ENCODE measurements at regions of chr9 and their contacts with region 1.

Region 1: GRCh38 chr9:107260437-107261086 is 22.5 kb upstream of the RAD23B start:
- DNase-seq: peak; percentile 88
- ATAC-seq: peak; percentile 98
- H3K4me3 ChIP-seq: peak overlapping the region; percentile 27; the same call in 1 of the 2 replicates
- H3K27ac ChIP-seq: peak overlapping the region; percentile 36
- H3K4me1 ChIP-seq: peaks cover 11% of the 10 kb centered on the region
- H3K27me3 ChIP-seq: no peaks in the 10 kb centered on the region
- CTCF ChIP-seq: no peak
- EP300 ChIP-seq: peak; percentile 95 to 97
- POLR2A ChIP-seq: no peak
- RAD21 ChIP-seq: no peak

Region 2: DNA sequence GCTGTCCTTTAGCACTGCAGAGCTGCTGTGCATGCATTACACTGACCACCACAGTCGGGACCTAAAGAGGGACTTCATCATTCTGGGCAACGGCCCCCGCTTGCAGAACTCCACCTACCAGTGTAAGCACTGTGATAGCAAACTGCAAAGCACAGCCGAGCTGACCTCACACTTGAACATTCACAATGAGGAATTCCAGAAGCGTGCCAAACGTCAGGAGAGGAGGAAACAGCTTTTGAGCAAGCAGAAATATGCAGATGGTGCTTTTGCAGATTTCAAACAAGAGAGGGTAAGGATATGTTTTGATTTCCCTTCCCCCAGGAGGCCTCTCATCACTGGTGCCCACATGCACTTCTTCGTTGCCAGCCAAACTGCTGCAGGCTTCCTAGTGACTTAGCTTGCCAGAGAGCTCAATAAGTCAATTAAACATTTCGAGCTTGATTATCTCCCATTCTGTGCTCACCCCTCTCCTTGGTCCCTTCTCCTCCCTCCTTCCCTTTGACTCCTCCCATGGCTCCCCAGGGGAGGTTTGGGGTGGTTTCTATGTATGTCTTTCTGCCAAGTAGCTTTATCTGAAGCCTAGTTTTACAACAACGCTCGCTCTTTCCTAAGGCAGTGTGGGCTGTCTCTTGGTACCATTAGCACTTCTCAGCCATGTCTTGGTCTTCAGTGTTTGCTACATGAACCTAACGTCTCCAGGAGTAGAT is 330.9 kb before region 1 on chr9:
- CTCF ChIA-PET with region 1: no interaction called
- POLR2A ChIA-PET with region 1: no interaction called
- RAD21 ChIA-PET with region 1: no interaction called
- SMC1A ChIA-PET with region 1: no interaction called
- in situ Hi-C with region 1: no loop called
- intact Hi-C with region 1: no loop called
- DNase-seq: no peak
- ATAC-seq: no peak
- H3K4me3 ChIP-seq: no peak overlapping the region
- H3K27ac ChIP-seq: no peak overlapping the region
- H3K4me1 ChIP-seq: no peaks in the 10 kb centered on the region
- H3K27me3 ChIP-seq: no peaks in the 10 kb centered on the region; a peak in 1 of 4 replicates
- CTCF ChIP-seq: no peak
- EP300 ChIP-seq: no peak
- POLR2A ChIP-seq: no peak
- RAD21 ChIP-seq: no peak

Region 3: DNA sequence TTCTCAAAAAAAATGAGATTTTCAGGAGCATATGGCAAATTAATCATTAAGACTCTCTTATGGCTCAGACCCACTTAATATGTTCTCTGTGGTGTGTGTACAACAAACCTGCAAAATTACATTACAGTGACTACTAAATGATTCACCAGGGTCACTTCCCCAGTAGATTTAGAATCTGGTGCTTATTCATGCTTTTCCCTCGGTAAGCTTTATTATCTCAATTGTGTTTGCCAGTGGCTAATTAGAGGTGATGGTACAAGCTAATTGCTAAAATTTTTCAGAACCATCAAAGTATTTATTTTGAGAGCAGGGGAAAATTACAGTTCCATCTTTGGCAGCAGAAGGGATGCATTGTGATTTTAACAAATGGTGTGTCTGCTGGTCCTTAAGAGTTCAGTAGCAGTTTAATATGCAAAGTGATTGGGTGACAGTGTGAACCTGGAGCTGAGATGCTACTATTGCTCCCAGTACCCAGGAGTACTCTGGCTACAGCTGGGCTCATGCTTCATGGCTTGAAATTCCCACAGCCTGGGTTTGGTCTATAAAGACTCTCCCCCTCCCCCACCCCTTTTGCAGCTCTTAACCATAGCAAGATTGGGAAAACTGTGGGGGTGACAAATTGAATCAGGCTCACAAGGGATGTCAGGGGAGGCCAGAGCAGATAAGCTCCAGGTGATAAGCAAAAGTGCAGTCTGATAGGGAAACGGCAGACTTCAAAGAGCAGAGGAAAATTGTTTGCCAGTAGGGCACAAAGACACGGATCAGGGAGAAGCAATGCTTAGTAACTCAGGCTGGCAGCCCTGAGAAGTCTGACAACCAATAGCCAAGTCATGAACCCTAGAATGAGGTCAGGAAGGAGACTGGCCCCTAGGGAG is 70.3 kb before region 1 on chr9:
- CTCF ChIA-PET with region 1: interaction called, 4 read pairs
- POLR2A ChIA-PET with region 1: no interaction called
- RAD21 ChIA-PET with region 1: interaction called, 12 read pairs
- SMC1A ChIA-PET with region 1: interaction called, 6 read pairs
- in situ Hi-C with region 1: no loop called
- intact Hi-C with region 1: no loop called
- DNase-seq: no peak
- ATAC-seq: peak; percentile 77
- H3K4me3 ChIP-seq: no peak overlapping the region
- H3K27ac ChIP-seq: no peak overlapping the region
- H3K4me1 ChIP-seq: no peaks in the 10 kb centered on the region
- H3K27me3 ChIP-seq: no peaks in the 10 kb centered on the region
- CTCF ChIP-seq: no peak
- EP300 ChIP-seq: no peak
- POLR2A ChIP-seq: no peak
- RAD21 ChIP-seq: no peak

Region 4: GRCh38 chr9:107218829-107219485 is 41.6 kb before region 1 on chr9:
- CTCF ChIA-PET with region 1: interaction called, 6 read pairs
- POLR2A ChIA-PET with region 1: interaction called, 28 read pairs
- RAD21 ChIA-PET with region 1: interaction called, 58 read pairs
- SMC1A ChIA-PET with region 1: interaction called, 40 read pairs
- in situ Hi-C with region 1: no loop called
- intact Hi-C with region 1: no loop called
- DNase-seq: peak; percentile 53
- ATAC-seq: peak; percentile 85
- H3K4me3 ChIP-seq: no peak overlapping the region
- H3K27ac ChIP-seq: peak overlapping the region; percentile 31; the same call in 1 of the 2 replicates
- H3K4me1 ChIP-seq: peaks cover 14% of the 10 kb centered on the region; the same call in 1 of the 2 replicates
- H3K27me3 ChIP-seq: no peaks in the 10 kb centered on the region
- CTCF ChIP-seq: no peak
- EP300 ChIP-seq: peak; percentile 49 to 83; a peak in 3 of 4 replicates
- POLR2A ChIP-seq: no peak
- RAD21 ChIP-seq: no peak

Region 5: GRCh38 chr9:107274953-107275422 is 14.4 kb after region 1 on chr9:
- CTCF ChIA-PET with region 1: interaction called, 25 read pairs
- POLR2A ChIA-PET with region 1: interaction called, 39 read pairs
- RAD21 ChIA-PET with region 1: interaction called, 53 read pairs
- SMC1A ChIA-PET with region 1: interaction called, 63 read pairs
- in situ Hi-C with region 1: no loop called
- intact Hi-C with region 1: no loop called
- DNase-seq: no peak
- ATAC-seq: peak; percentile 27
- H3K4me3 ChIP-seq: no peak overlapping the region
- H3K27ac ChIP-seq: no peak overlapping the region
- H3K4me1 ChIP-seq: peaks cover 6% of the 10 kb centered on the region
- H3K27me3 ChIP-seq: no peaks in the 10 kb centered on the region
- CTCF ChIP-seq: no peak
- EP300 ChIP-seq: no peak
- POLR2A ChIP-seq: no peak
- RAD21 ChIP-seq: no peak

Region 6: DNA sequence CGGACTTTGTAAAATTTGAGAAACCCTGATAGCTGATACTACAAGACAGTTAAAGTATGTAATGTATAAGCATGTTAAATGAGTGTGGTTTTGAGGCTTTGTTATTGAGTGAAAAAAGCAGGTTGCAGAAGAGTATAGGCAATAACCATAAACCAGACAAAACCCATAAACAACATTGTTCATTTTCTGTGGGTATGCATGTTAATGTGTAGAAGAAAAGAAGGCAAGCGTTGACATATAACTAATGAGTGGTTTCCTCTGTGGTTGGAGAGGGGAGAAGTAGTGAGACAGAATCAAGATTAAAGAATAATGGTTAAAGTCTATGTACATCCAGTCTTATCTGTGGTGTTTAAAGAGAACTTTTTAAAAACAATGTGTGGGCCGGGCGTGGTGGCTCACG is 48.7 kb after region 1 on chr9:
- CTCF ChIA-PET with region 1: interaction called, 5 read pairs
- POLR2A ChIA-PET with region 1: interaction called, 3 read pairs
- RAD21 ChIA-PET with region 1: interaction called, 6 read pairs
- SMC1A ChIA-PET with region 1: interaction called, 6 read pairs
- in situ Hi-C with region 1: no loop called
- intact Hi-C with region 1: loop called (anchors 2 kb)
- DNase-seq: peak; percentile 25
- ATAC-seq: peak; percentile 77
- H3K4me3 ChIP-seq: no peak overlapping the region
- H3K27ac ChIP-seq: no peak overlapping the region
- H3K4me1 ChIP-seq: 0 out of 2 replicates have a peak, but pooled peaks cover 4% of the 10 kb centered on the region
- H3K27me3 ChIP-seq: no peaks in the 10 kb centered on the region
- CTCF ChIP-seq: no peak
- EP300 ChIP-seq: peak in 1 of 2 experiments; percentile 63; a peak in 1 of 4 replicates
- POLR2A ChIP-seq: no peak
- RAD21 ChIP-seq: no peak

Measured in GM12878 (cell line).